HepG2 (cell line): ENCODE measurements at regions of chr5 and their contacts with region 1.

Region 1: GRCh38 chr5:97162045-97162444 is 19.6 kb upstream of the LIX1 start:
- DNase-seq: peak; percentile 65
- ATAC-seq: peak; percentile 80
- H3K4me3 ChIP-seq: no peak overlapping the region
- H3K27ac ChIP-seq: no peak overlapping the region
- H3K4me1 ChIP-seq: peaks cover 7% of the 10 kb centered on the region; the same call in 1 of the 2 replicates
- H3K27me3 ChIP-seq: no peaks in the 10 kb centered on the region
- CTCF ChIP-seq: peak; percentile 83
- EP300 ChIP-seq: no peak
- POLR2A ChIP-seq: no peak
- RAD21 ChIP-seq: peak; percentile 67

Region 2: GRCh38 chr5:96601811-96602244 is 560.2 kb before region 1 on chr5:
- CTCF ChIA-PET with region 1: no interaction called
- POLR2A ChIA-PET with region 1: no interaction called
- in situ Hi-C with region 1: loop called (anchors 25 kb)
- intact Hi-C with region 1: no loop called
- DNase-seq: peak; percentile 56
- ATAC-seq: peak; percentile 90
- H3K4me3 ChIP-seq: no peak overlapping the region
- H3K27ac ChIP-seq: no peak overlapping the region
- H3K4me1 ChIP-seq: peaks cover 12% of the 10 kb centered on the region; the same call in 1 of the 2 replicates
- H3K27me3 ChIP-seq: peaks cover 0 to 5% of the 10 kb centered on the region in 2 experiments; a peak in 1 of 5 replicates
- CTCF ChIP-seq: peak; percentile 76
- EP300 ChIP-seq: no peak
- POLR2A ChIP-seq: no peak
- RAD21 ChIP-seq: peak; percentile 49; the same call in 1 of the 2 replicates

Region 3: GRCh38 chr5:96752341-96753016 is 409.6 kb before region 1 on chr5:
- CTCF ChIA-PET with region 1: interaction called, 30 read pairs
- POLR2A ChIA-PET with region 1: interaction called, 3 read pairs
- in situ Hi-C with region 1: loop called (anchors 5 kb)
- intact Hi-C with region 1: loop called (anchors 1 kb)
- DNase-seq: peak; percentile 65
- ATAC-seq: peak; percentile 29; the same call in 1 of the 3 replicates
- H3K4me3 ChIP-seq: no peak overlapping the region
- H3K27ac ChIP-seq: no peak overlapping the region
- H3K4me1 ChIP-seq: no peaks in the 10 kb centered on the region
- H3K27me3 ChIP-seq: no peaks in the 10 kb centered on the region
- CTCF ChIP-seq: peak; percentile 48
- EP300 ChIP-seq: no peak
- POLR2A ChIP-seq: no peak
- RAD21 ChIP-seq: no peak

Region 4: DNA sequence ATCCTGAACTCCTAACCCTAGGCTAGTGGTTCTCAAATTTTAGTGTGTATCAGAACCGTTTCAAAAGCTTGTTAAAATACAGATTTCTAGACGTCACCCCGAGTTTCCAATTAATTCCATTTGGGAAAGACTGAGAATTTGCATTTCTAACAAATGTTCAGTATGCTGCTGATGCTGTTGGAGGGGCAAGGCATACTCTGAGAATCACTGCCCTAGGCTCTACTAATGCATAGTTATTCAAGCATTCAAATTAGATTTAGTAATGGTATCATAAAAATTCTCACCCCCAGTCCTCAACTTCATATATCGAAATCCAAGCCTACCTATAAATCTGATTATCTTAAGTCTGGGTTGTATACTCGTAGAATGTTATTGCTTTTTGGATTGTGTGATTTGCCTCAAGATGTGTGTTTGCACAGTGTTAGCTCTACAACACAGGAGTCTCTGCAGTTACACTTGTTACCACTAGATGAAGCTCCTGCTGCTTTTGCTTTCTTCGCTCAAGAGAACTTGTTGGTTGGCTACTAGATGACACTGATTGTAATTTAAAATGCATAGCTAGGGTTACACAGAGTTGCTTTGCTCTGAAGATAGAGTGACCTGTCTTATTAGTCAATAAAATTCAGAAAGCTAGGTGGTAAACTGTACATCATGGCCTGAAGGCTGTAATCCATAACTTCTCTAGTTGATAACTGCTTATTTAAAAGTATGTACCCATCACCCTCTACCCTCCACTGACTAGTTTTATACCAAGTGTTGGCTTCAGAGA is 293.3 kb before region 1 on chr5:
- CTCF ChIA-PET with region 1: interaction called, 21 read pairs
- POLR2A ChIA-PET with region 1: no interaction called
- in situ Hi-C with region 1: loop called (anchors 10 kb)
- intact Hi-C with region 1: loop called (anchors 1 kb)
- DNase-seq: peak; percentile 62
- ATAC-seq: peak; percentile 95
- H3K4me3 ChIP-seq: no peak overlapping the region
- H3K27ac ChIP-seq: no peak overlapping the region
- H3K4me1 ChIP-seq: peaks cover 58% of the 10 kb centered on the region
- H3K27me3 ChIP-seq: no peaks in the 10 kb centered on the region; a peak in 1 of 5 replicates
- CTCF ChIP-seq: peak; percentile 89
- EP300 ChIP-seq: no peak
- POLR2A ChIP-seq: no peak
- RAD21 ChIP-seq: peak; percentile 71

Region 5: GRCh38 chr5:96934708-96935558 is 227.1 kb before region 1 on chr5:
- CTCF ChIA-PET with region 1: no interaction called
- POLR2A ChIA-PET with region 1: no interaction called
- in situ Hi-C with region 1: no loop called
- intact Hi-C with region 1: loop called (anchors 2 kb)
- DNase-seq: peak; percentile 88
- ATAC-seq: peak; percentile 84
- H3K4me3 ChIP-seq: peak overlapping the region; percentile 68 to 84 (median 73)
- H3K27ac ChIP-seq: peak overlapping the region; percentile 95
- H3K4me1 ChIP-seq: peaks cover 31% of the 10 kb centered on the region
- H3K27me3 ChIP-seq: no peaks in the 10 kb centered on the region
- CTCF ChIP-seq: peak; percentile 3; the same call in 1 of the 2 replicates
- EP300 ChIP-seq: peak in 1 of 2 experiments; percentile 60; a peak in 1 of 4 replicates
- POLR2A ChIP-seq: peak; percentile 57 to 71
- RAD21 ChIP-seq: 0 out of 2 replicates have a peak, but pooled peaks have one; percentile 11

Region 6: GRCh38 chr5:97044052-97044451 is 118.0 kb before region 1 on chr5:
- CTCF ChIA-PET with region 1: interaction called, 5 read pairs
- POLR2A ChIA-PET with region 1: no interaction called
- in situ Hi-C with region 1: no loop called
- intact Hi-C with region 1: loop called (anchors 1 kb)
- DNase-seq: peak; percentile 27
- ATAC-seq: peak; percentile 97
- H3K4me3 ChIP-seq: no peak overlapping the region
- H3K27ac ChIP-seq: no peak overlapping the region
- H3K4me1 ChIP-seq: peaks cover 23% of the 10 kb centered on the region
- H3K27me3 ChIP-seq: no peaks in the 10 kb centered on the region
- CTCF ChIP-seq: peak; percentile 84
- EP300 ChIP-seq: no peak
- POLR2A ChIP-seq: no peak
- RAD21 ChIP-seq: peak; percentile 46